ENCODE measurements at regions of chr2 and their contacts with region 1.

Region 1: DNA sequence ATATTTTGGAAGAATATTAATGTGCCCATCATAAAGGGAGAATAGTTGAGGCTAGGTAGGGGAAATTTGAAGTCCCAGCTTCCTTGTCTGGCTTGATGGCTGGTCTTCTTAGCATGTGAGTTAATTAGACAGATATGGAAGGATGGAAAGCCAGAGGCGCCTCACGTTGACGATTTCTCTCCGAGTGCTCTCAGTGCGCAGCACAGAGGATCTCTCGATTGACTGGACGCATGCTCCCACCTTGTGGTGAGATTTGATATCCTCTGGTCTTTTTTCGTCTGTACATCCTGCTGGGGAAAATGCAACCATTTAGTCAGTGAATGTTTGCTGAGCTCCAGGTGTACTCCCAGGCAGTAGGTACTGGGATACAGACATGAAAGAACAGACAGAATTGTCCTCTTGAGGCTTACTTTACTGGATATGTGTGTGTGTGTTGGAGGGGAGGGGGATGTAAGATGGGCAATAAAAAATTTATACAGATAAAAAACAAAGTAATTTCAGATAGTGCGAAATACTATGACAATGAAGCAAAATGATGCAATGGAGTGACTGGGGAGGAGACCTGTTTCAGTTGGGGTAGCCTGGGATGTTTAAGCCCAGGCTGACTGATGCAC is 66.9 kb upstream of the ZNG1B start:
- DNase-seq: peak; percentile 69 to 73
- H3K4me3 ChIP-seq: no peak overlapping the region
- H3K27ac ChIP-seq: no peak overlapping the region
- H3K4me1 ChIP-seq: peaks cover 12% of the 10 kb centered on the region
- H3K27me3 ChIP-seq: no peaks in the 10 kb centered on the region
- CTCF ChIP-seq: peak; percentile 75

Region 2: GRCh38 chr2:113203901-113204519 is 166.6 kb before region 1 on chr2:
- CTCF ChIA-PET with region 1: interaction called, 10 read pairs
- POLR2A ChIA-PET with region 1: no interaction called
- intact Hi-C with region 1: loop called (anchors 1 kb)
- DNase-seq: peak; percentile 64 to 79
- H3K4me3 ChIP-seq: no peak overlapping the region
- H3K27ac ChIP-seq: no peak overlapping the region
- H3K4me1 ChIP-seq: peaks cover 6% of the 10 kb centered on the region; the same call in 1 of the 2 replicates
- H3K27me3 ChIP-seq: no peaks in the 10 kb centered on the region
- CTCF ChIP-seq: peak; percentile 94